Mammary epithelial cell (primary cell): ENCODE measurements at regions of chr11 and their contacts with region 1.

Region 1: DNA sequence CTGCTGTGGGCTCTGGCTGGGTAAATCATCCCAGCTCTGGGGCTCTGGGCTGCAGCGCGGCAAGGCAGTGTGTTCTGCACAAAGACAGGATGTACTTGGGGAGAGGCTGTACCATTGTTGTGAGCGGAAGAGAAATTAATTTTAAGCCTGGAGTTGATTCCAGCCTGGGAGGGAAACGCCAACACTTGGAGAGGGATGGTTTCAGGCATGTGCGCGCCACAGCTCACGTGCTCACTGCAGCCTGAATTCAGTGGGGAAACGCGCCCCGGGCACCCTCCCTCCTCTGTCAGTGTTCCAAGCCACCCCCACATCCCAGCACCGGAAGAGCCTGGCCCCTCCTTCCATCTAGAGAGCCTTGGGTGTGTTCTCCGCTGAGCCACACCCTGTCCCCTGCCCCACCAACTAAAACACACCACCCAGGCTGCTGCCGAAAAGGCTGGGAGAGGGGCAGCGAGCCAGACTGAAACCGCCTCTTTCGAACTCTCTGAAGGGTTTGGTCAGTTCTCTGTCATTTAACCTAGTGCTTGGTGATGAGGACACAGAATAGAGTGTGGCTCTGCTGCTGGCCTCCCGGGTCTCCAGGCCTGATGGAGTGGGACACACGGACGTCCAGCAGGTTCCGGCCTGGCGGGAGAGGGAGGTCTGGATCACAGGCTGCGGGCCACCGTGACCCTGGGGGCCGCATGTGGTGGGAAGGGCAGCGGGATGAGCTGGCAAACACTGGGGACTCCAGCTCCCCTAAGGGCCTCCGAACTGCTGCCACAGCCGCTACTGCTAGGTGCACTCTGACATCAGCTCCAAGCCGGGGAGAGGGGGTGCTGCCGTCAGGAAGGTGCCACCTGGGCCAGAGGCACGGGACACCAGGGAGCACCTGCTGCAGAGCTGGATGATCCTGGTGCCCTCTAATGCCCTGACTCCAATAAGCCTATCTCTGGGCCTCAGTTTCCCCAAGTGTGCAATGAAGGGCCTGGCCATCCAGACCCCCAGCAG is 230.8 kb downstream of the CTTN start:
- DNase-seq: no peak
- H3K4me3 ChIP-seq: peak overlapping the region in 1 of 3 experiments; percentile 23
- H3K27ac ChIP-seq: no peak overlapping the region
- H3K4me1 ChIP-seq: peaks cover 7% of the 10 kb centered on the region
- H3K27me3 ChIP-seq: no peaks in the 10 kb centered on the region
- CTCF ChIP-seq: no peak

Region 2: GRCh38 chr11:70364745-70365543 is 264.2 kb before region 1 on chr11:
- CTCF ChIA-PET with region 1: no interaction called
- dilution Hi-C with region 1: no loop called
- in situ Hi-C with region 1: no loop called
- intact Hi-C with region 1: no loop called
- DNase-seq: no peak
- H3K4me3 ChIP-seq: no peak overlapping the region
- H3K27ac ChIP-seq: no peak overlapping the region
- H3K4me1 ChIP-seq: no peaks in the 10 kb centered on the region
- H3K27me3 ChIP-seq: no peaks in the 10 kb centered on the region
- CTCF ChIP-seq: no peak

Region 3: DNA sequence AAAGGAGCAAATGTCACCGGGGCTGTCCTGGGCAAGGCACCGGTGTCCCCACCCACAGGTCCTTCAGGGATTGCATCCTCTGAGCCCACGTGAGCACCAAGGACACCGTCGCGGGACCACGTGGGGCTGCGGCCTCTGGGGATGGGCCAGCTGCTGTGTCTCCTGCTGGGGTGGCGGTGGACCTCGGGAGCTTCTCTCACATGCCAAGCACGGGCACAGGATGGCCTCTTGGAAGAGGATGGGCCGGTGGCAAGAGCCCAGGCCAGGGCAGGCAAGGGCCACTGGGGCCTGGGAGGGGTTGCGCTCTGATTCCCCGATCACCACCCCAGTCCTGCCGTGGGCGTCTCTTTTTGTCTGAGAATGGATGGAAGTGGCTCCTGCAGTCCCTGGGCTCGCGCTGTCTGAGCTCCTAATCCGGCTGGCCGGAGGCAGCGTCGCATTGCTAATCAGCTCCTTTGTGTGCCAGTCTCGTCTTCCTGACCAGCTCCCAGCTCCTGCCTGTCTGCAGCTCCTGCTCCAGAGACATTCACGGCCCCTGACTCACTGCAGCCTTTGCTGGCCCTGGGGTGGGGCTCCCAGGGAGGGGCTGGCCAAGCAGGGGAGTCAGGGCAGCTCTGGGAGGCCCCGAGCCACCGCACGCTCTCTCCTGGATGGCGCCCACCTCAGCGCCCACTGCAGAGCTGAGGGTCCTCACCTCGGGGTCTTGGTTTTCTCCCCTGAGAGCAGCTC is 84.2 kb before region 1 on chr11:
- CTCF ChIA-PET with region 1: no interaction called
- dilution Hi-C with region 1: loop called (anchors 10 kb)
- in situ Hi-C with region 1: no loop called
- intact Hi-C with region 1: no loop called
- DNase-seq: no peak
- H3K4me3 ChIP-seq: no peak overlapping the region
- H3K27ac ChIP-seq: no peak overlapping the region
- H3K4me1 ChIP-seq: no peaks in the 10 kb centered on the region
- H3K27me3 ChIP-seq: no peaks in the 10 kb centered on the region
- CTCF ChIP-seq: no peak

Region 4: DNA sequence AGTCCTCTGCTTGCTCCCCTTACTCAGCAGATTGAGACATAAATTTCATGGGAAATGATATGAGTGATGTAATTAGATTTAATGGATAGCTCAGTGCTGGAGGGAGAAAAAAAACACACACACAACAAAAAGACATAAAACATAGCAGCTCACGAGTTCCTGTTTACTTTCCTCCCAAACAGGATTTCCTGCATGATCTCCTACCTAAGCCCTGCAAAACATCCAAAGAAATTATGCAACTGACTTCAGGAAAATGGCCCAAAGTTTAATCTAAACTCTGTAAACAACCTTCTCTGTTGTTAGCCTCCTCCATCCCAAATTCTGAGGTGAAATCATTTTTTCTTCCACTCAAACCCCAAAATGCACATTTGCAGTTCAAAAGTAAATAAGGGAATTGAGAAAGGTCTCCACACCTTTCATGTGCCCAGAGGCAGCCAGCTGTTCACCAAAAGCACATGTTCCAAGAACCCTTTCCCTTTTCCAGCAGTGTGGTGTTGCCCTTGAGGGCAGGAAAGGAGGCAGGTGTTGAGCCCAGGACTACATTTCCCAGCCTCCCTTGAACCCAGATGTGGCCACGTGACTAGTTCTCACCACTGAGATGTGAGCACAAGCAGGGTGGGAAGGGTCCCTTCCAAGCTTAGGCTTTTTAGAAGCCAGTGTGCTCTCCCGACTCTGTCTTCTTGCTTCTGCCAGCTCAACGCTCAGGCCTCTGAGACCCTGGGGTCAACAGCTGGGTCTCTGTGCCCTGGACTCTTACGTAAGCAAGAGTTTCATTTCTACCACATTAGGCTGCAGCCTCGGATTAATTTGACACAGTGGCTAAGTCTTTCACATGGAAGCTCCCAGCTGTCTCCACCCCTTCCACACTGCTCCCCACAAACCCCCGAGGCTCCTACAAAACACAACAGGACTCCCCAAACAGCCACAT is 70.4 kb after region 1 on chr11:
- CTCF ChIA-PET with region 1: no interaction called
- dilution Hi-C with region 1: no loop called
- in situ Hi-C with region 1: no loop called
- intact Hi-C with region 1: no loop called
- DNase-seq: no peak
- H3K4me3 ChIP-seq: no peak overlapping the region
- H3K27ac ChIP-seq: no peak overlapping the region
- H3K4me1 ChIP-seq: no peaks in the 10 kb centered on the region
- H3K27me3 ChIP-seq: no peaks in the 10 kb centered on the region
- CTCF ChIP-seq: no peak

Region 5: DNA sequence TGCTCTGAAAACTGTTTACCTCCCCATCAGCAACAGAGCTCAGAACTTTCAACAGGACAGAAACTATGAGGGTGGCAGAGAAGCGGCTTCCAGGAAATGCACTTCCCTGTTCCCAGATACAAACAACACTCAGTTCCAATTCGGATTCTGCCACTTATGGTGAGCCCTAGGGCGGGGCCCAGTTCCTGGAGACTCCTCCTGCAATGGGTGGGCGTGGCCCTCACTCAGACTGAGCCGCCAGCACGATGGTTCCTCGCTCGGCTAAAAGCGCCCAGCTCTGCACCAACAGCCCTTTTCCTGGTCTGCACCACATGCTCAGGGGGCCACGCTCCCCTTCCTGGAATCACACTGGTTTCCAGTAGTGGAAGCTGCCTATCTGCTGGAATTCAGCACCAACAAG is 83.3 kb after region 1 on chr11:
- CTCF ChIA-PET with region 1: no interaction called
- dilution Hi-C with region 1: loop called (anchors 10 kb)
- in situ Hi-C with region 1: no loop called
- intact Hi-C with region 1: no loop called
- DNase-seq: no peak
- H3K4me3 ChIP-seq: no peak overlapping the region
- H3K27ac ChIP-seq: no peak overlapping the region
- H3K4me1 ChIP-seq: no peaks in the 10 kb centered on the region
- H3K27me3 ChIP-seq: peaks cover 3% of the 10 kb centered on the region
- CTCF ChIP-seq: no peak

Region 6: GRCh38 chr11:70725278-70725677 is 96.1 kb after region 1 on chr11:
- CTCF ChIA-PET with region 1: no interaction called
- dilution Hi-C with region 1: no loop called
- in situ Hi-C with region 1: no loop called
- intact Hi-C with region 1: no loop called
- DNase-seq: no peak
- H3K4me3 ChIP-seq: no peak overlapping the region
- H3K27ac ChIP-seq: no peak overlapping the region
- H3K4me1 ChIP-seq: no peaks in the 10 kb centered on the region
- H3K27me3 ChIP-seq: no peaks in the 10 kb centered on the region
- CTCF ChIP-seq: no peak

Region 7: DNA sequence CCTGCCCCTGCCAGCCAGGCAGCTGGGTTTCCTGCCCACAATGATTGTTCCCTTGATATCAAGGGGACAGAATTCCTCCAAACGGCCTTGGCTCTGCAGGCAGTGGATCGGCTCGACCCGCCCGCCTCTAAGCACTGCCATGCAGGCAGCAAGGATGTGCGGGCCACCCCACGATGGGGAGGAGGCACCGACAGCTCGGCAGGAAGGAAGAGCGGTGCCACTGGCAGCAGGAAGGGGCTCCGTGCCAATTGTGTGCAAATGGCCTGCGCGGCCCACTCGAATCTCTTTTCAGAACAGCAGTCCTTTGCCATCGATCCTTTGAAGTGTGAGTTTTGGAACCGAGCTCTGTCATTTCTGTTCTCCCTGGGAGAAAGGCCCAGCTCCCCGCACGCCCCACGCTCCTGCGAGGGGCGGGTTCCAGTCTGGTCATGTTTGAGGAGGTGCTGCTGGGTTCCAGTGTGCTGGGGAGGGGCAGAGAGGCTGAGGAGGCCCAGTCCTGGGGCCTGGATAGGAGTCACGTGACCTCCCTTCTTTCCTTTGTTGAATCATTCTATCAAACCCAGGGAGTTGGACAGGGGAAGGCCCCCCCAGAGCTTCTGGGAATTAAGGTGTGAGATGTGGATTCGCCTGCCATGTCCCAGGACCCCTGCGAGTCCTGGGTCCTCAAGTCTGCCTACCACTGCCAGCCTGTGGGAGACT is 175.1 kb after region 1 on chr11:
- CTCF ChIA-PET with region 1: no interaction called
- dilution Hi-C with region 1: loop called (anchors 10 kb)
- in situ Hi-C with region 1: no loop called
- intact Hi-C with region 1: no loop called
- DNase-seq: no peak
- H3K4me3 ChIP-seq: no peak overlapping the region
- H3K27ac ChIP-seq: no peak overlapping the region
- H3K4me1 ChIP-seq: peaks cover 4% of the 10 kb centered on the region
- H3K27me3 ChIP-seq: no peaks in the 10 kb centered on the region
- CTCF ChIP-seq: no peak